B cell (primary cell): ENCODE measurements at regions of chr7 and their contacts with region 1.

Region 1: DNA sequence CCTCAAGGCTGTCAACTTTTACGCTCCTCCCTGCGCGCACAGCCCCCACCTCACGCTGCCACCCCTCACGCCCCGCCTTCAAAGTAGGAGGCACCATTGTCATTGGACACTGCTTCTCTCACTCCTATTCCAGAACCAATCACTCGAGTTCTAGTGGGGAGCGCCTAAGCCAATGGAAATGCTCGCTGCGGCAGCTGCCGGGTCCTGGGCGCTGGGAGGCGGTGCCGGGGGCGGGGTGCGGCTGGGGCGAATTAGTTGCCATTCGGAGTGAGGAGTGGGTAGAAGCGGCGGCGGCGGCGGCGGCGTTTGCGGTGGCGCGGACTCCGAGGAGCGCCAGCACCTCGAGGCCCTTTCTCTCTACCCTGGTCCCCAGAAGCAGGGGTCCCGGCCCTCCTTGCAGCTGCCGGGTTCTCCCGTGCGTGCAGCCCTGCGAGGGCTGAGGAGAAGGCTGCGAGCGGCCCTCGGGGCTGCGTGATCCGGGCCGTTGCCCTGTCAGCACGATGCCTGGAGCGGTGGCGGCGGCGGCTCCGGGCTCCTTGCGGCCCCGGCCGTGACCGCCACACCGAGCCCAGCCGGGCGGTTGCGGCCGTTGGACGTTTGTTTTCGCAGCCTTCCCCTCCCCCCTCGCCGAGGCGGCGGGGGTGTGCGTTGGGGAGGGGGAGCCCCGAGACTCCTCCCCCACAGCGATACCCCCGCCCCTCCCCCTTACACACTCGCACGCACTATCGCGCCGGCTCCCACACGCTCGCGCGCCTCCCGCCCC is at the start of gene GLCCI1:
- DNase-seq: peak; percentile 97
- ATAC-seq: peak; percentile 86
- H3K4me3 ChIP-seq: peak within 1 kb of the TSS; percentile 74 to 95 (median 87)
- H3K4me3 Mint-ChIP-seq: peak within 1 kb of the TSS; percentile 92
- H3K27ac ChIP-seq: peak within 1 kb of the TSS; percentile 82 to 83
- H3K27ac Mint-ChIP-seq: peak within 1 kb of the TSS; percentile 93
- H3K4me1 ChIP-seq: peaks cover 35 to 44% of the 10 kb centered on the region in 2 donors
- H3K4me1 Mint-ChIP-seq: peaks cover 34% of the 10 kb centered on the region
- H3K27me3 ChIP-seq: no peaks in the 10 kb centered on the region
- H3K27me3 Mint-ChIP-seq: no peaks in the 10 kb centered on the region
- CTCF ChIP-seq: no peak
- total RNA-seq, gene GLCCI1: 45.7 and 50.3 TPM in 2 replicates

Region 2: DNA sequence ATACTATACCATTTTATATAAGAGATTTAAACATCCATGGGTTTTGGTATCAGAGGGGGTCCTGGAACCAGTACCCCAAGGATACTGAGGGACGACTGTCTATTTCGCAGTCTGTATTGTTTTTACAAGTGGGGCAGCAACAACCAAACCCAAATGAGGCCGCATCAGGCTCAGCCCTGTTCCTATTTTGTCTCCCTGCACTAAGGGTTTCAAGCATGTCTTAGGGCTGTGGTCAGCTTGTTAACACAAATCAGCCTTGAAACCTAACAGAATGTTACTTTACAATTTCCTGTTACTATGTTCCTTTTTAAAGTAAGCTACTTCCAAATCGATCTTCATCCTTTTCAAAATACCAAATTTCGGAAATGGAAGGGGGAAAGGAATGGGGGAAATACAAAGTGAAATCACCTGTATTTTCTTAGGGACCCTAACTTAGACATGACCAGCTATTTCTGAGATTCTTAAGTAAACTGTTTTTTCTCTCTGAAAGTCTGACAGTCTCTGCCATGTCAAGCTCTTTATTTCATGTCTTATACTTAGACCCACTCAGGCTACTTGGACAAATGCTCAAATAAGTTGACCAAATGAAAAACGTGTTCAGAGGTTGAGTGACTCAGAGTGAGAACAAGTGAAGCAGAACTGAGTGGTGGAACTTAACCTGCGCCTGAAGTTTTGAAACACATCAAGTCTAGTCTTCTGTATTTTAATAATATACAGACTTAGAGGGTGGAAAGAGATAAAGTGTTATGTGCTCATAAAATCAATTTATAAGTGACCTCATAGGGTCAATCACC is 710.6 kb before region 1 on chr7:
- CTCF ChIA-PET with region 1: no interaction called
- POLR2A ChIA-PET with region 1: no interaction called
- intact Hi-C with region 1: loop called (anchors 10 kb)
- DNase-seq: peak; percentile 61
- ATAC-seq: peak; percentile 74
- H3K4me3 ChIP-seq: peak overlapping the region; percentile 12 to 63 (median 51)
- H3K4me3 Mint-ChIP-seq: peak overlapping the region; percentile 71
- H3K27ac ChIP-seq: peak overlapping the region; percentile 80 to 81
- H3K27ac Mint-ChIP-seq: peak overlapping the region; percentile 89
- H3K4me1 ChIP-seq: peaks cover 52 to 56% of the 10 kb centered on the region in 2 donors
- H3K4me1 Mint-ChIP-seq: peaks cover 61% of the 10 kb centered on the region
- H3K27me3 ChIP-seq: no peaks in the 10 kb centered on the region
- H3K27me3 Mint-ChIP-seq: no peaks in the 10 kb centered on the region
- CTCF ChIP-seq: no peak

Region 3: DNA sequence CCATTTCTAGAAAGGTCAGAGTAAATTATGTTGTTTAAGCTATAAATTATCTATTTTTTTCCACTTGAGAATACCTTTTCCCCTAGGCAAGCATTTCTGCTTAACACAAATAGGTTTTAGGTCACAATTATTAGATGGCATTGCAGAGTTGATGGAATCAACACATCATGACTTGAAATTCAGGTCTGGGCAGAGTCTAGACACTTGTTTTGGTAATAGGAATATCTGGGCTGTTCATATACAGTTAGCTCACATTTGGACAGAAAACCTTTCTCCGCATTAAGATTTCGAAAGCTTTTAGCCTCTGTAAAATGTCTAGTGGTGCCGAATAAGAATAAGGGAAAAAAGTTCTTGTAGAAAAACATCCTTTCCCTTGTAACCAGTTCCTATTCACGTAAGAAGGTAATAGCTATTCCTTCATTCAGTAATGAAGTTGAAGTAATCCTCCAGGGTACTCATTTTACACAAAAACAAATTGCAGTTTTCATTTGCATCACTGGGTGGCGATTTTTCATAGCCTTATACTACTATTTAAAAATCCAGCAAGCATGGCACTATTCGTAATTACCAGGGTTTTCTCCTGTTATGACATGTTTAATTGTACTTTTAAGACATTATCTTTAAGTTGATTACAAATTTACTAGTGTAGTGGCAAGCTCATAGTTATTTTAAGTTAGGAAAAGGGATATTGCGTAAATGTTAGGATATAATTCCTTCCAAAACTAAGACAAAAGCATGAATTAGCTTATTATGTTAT is 287.4 kb before region 1 on chr7:
- CTCF ChIA-PET with region 1: interaction called, 16 read pairs
- POLR2A ChIA-PET with region 1: interaction called, 3 read pairs
- intact Hi-C with region 1: loop called (anchors 1 kb)
- DNase-seq: peak; percentile 78
- ATAC-seq: peak; percentile 84
- H3K4me3 ChIP-seq: no peak overlapping the region
- H3K4me3 Mint-ChIP-seq: no peak overlapping the region
- H3K27ac ChIP-seq: peak overlapping the region; percentile 48 to 54
- H3K27ac Mint-ChIP-seq: peak overlapping the region; percentile 89
- H3K4me1 ChIP-seq: peaks cover 3 to 11% of the 10 kb centered on the region in 2 donors
- H3K4me1 Mint-ChIP-seq: peaks cover 28% of the 10 kb centered on the region
- H3K27me3 ChIP-seq: no peaks in the 10 kb centered on the region
- H3K27me3 Mint-ChIP-seq: no peaks in the 10 kb centered on the region
- CTCF ChIP-seq: peak; percentile 81

Region 4: GRCh38 chr7:7857143-7857583 is 111.6 kb before region 1 on chr7:
- CTCF ChIA-PET with region 1: no interaction called
- POLR2A ChIA-PET with region 1: no interaction called
- intact Hi-C with region 1: loop called (anchors 1 kb)
- DNase-seq: peak; percentile 71
- ATAC-seq: peak; percentile 88
- H3K4me3 ChIP-seq: peak overlapping the region in 1 of 5 experiments; percentile 28
- H3K4me3 Mint-ChIP-seq: peak overlapping the region; percentile 32
- H3K27ac ChIP-seq: peak overlapping the region; percentile 85 to 87
- H3K27ac Mint-ChIP-seq: peak overlapping the region; percentile 94
- H3K4me1 ChIP-seq: peaks cover 31% of the 10 kb centered on the region in 2 donors
- H3K4me1 Mint-ChIP-seq: peaks cover 32% of the 10 kb centered on the region
- H3K27me3 ChIP-seq: no peaks in the 10 kb centered on the region
- H3K27me3 Mint-ChIP-seq: no peaks in the 10 kb centered on the region
- CTCF ChIP-seq: no peak

Region 5: DNA sequence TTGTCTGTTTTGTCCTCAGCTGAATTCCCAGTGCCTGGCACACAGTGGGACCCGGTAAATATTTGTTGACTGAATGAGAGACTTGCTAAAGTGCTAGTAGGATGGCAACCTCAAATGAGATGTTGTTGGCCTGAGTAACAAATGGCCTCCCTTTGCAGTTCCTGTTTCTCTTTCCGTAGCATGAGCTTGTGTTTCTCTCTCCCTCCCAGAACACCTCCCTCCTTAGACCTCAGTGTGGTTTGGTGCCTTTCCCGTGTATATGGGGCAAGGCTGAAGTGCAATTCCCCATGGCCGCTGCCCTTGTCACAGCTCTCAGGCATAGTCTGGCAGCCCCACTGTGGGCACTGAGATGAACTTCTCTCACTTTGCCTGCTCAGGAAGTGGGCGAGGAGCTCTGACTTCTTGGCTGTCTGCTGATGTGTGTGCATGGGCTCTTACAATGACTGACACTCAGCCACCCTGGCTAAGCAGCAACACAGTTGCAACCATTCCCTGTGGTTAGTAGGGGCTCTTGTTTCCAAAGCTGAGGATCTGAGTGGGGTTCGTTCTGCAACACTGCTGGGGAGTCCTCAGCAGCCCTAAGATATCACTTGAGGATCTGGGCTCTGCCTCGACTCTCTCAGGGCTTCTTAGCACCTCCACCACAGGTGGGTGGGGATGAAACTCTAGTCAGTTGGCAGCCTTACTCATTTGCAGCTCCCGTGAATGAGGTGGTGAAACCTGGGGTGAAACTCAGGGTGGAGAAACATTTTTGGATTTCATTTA is 157.1 kb after region 1 on chr7:
- CTCF ChIA-PET with region 1: no interaction called
- POLR2A ChIA-PET with region 1: no interaction called
- intact Hi-C with region 1: loop called (anchors 5 kb)
- DNase-seq: peak; percentile 73
- ATAC-seq: peak; percentile 92
- H3K4me3 ChIP-seq: peak overlapping the region in 2 of 5 experiments; percentile 16 to 37
- H3K4me3 Mint-ChIP-seq: peak overlapping the region; percentile 69
- H3K27ac ChIP-seq: peak overlapping the region; percentile 58 to 74
- H3K27ac Mint-ChIP-seq: peak overlapping the region; percentile 95
- H3K4me1 ChIP-seq: peaks cover 18 to 33% of the 10 kb centered on the region in 2 donors
- H3K4me1 Mint-ChIP-seq: peaks cover 57% of the 10 kb centered on the region
- H3K27me3 ChIP-seq: no peaks in the 10 kb centered on the region
- H3K27me3 Mint-ChIP-seq: no peaks in the 10 kb centered on the region
- CTCF ChIP-seq: no peak